Body of pancreas (tissue), 4 donors: ENCODE measurements at regions of chr5 and their contacts with region 1.

Region 1: GRCh38 chr5:54217826-54218503 is 92.4 kb downstream of the ARL15 start:
- DNase-seq: peak; percentile 46 to 65 (median 51)
- ATAC-seq: peak; percentile 69
- H3K4me3 ChIP-seq: no peak overlapping the region
- H3K27ac ChIP-seq: no peak overlapping the region
- H3K4me1 ChIP-seq: no peaks in the 10 kb centered on the region
- H3K27me3 ChIP-seq: no peaks in the 10 kb centered on the region
- CTCF ChIP-seq: peak; percentile 69 to 92 (median 86)
- POLR2A ChIP-seq: no peak

Region 2: DNA sequence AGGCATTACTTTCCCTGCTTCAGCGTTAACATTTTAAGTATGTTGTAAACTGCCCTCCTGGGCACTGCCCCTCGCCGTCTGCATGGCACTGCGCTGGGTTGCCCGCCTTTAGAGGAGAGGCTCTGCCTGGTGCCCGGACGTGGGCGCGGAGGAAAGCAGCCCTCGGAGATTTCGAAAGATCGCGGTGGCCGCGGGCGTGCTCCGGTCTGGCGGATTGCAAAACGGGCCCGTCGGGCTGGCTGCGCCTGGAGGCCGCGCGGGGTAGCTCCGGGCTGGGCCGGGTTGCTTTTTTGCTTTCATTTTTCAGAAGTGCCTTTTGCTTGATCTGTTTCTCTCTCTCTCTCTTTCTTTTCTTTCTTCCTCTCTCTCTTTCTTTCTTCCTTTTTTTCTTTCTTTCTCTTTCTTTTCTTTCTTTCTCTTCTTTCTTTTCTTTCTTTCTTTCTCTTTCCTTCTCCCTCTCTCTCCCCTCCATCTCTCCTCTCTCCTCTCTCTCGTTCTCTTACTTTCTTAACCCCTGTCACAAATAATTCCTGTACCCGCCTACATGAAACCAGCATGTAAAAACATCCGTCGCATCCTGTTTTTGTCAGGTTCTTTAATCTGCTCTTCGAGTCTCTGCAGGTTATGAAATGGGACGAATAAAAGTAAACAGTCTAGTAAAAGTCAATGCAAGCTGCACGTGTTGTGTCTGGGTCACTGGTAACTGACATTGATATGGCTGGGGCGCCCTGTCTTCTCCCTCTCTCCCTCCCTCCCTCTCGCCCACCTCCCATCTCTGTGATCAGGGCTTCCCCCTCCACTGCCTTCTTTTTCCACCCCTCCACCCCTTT is 735.9 kb before region 1 on chr5:
- intact Hi-C with region 1: loop called (anchors 10 kb)
- DNase-seq: peak; percentile 59 to 69 (median 64)
- ATAC-seq: peak; percentile 67
- H3K4me3 ChIP-seq: peak overlapping the region; percentile 16
- H3K27ac ChIP-seq: no peak overlapping the region
- H3K4me1 ChIP-seq: peaks cover 12% of the 10 kb centered on the region
- H3K27me3 ChIP-seq: no peaks in the 10 kb centered on the region
- CTCF ChIP-seq: peak in 6 of 7 experiments; percentile 11 to 66 (median 29)
- POLR2A ChIP-seq: no peak

Region 3: GRCh38 chr5:54171645-54172384 is 46.1 kb before region 1 on chr5:
- intact Hi-C with region 1: no loop called
- DNase-seq: peak; percentile 41 to 73 (median 60)
- ATAC-seq: peak; percentile 91
- H3K4me3 ChIP-seq: no peak overlapping the region
- H3K27ac ChIP-seq: no peak overlapping the region
- H3K4me1 ChIP-seq: peaks cover 7% of the 10 kb centered on the region
- H3K27me3 ChIP-seq: no peaks in the 10 kb centered on the region
- CTCF ChIP-seq: no peak
- POLR2A ChIP-seq: no peak